GM18951 (cell line): ENCODE measurements at regions of chr1 and their contacts with region 1.

Region 1: DNA sequence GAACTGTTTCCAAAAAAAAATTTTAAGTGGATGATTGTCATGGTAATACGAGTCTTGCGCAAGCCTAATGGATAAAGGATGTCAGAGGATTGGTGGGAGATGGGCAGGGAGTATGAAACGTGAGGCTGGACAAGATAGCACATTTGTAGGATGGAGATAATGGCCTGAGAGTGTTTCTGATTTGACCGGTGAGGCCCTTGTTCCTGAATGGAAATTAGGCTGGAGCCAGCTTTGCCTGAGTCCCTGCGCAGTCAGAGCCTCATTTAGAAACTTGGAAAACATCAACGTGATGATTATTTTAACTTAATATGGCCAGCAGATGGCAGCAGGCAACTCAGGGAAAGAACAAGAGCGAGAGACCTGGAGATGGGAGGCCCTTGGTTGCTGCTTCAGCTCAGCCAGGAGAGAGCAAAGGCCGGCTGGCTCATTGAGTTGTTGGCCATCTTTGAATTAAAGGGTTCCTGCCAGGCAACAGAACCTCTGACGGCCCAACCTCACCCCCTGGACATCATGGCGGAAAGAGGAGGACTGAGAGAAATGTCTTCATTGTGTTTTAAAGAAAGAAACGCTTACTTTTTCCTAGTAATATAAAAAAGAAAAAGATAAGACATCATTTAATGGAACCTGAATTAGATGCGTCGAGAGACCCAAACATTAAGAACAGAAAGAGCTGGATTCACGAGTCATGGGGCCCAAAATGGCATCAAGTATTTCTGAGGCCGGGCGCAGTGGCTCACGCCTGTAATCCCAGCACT is 80.3 kb downstream of the SELENOF start:
- POLR2A ChIP-seq: no peak

Region 2: GRCh38 chr1:87084244-87084836 is 250.7 kb after region 1 on chr1:
- in situ Hi-C with region 1: loop called (anchors 5 kb)
- POLR2A ChIP-seq: no peak